CD8-positive, alpha-beta T cell (primary cell): ENCODE measurements at regions of chr17 and their contacts with region 1.

Region 1: DNA sequence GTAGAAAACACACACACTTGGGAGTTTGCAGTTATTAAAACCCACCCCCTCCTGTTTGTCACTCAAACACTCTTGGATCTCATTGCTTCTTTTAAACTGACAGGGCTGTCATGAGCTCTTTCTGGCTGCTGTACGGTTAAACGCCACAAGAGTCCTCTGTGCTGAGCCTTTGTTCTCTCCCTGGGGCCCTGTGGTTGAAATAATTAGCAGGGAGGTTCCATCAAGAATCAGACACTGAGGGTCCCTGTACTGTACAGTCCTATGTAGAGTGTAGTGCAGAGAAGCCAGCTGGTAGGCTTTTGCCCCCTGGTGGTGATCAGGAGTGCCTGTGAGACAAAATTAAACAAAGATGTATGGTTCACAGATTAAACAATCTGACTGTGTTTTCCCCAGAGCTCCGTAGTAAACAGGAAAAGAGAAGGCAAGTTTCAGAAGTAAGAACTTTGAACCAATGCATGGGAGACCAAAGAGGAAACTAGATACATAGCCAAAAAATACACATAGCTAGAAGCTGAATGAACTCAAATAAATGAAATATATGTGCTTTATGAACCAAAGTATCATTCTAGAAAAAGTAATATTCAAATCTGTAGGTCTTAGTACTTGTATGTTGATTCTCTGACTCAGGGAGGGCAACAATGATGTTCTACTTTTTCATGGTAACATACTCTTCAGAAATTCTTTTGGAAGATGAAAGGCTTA is 1.4 kb upstream of the SSH2 start:
- DNase-seq: peak; percentile 27 to 91 (median 70)
- ATAC-seq: peak; percentile 66
- H3K4me3 ChIP-seq: peak overlapping the region; percentile 77 to 82
- H3K4me3 Mint-ChIP-seq: no peak overlapping the region
- H3K27ac ChIP-seq: peak overlapping the region in 1 of 2 experiments; percentile 37
- H3K27ac Mint-ChIP-seq: no peak overlapping the region
- H3K4me1 ChIP-seq: peaks cover 27% of the 10 kb centered on the region
- H3K4me1 Mint-ChIP-seq: peaks cover 29% of the 10 kb centered on the region
- H3K27me3 ChIP-seq: no peaks in the 10 kb centered on the region
- H3K27me3 Mint-ChIP-seq: no peaks in the 10 kb centered on the region
- CTCF ChIP-seq: peak; percentile 85

Region 2: DNA sequence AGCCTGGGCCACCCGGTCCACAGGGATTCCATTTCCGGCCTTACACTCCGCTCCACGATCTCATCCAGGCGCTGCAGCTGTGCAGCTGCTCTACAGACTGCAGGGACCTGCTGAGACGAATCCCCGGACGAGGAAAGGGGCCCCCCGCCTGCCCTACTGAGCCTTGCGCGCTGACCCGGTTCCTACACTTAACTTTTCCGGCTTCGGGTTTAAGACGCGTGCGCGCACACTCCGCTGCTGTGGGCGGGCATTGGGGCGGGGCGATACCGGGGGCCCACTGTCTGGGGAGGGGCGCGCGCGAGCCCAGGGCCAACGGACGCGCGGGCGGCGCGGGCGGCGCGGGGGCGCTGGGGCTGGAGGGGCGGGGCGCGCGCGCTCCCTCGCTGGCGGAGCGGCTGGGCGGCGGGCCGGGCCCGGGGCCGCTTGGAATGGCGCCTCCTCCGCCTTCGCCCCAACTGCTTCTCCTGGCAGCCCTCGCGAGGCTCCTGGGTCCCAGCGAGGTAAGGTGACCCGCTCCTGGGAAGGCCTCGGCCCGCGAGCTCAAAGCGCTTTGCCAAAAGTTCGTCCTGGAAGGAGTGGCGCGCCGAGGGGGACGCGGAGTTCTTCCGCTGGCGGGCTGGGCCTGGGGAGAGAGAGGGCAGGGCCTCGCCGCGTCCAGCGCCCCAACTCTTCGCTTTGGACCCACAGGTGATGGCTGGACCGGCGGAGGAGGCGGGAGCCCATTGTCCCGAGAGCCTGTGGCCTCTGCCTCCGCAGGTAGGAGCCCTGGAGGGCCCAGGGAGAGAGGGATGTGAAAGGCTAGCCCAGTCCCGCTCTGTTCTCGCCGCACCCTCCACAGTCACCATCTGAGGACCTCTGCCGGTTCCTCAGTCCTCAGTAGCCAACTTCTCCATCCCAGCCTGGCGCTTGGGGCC is 362.8 kb before region 1 on chr17 and contains the start of gene TP53I13:
- CTCF ChIA-PET with region 1: interaction called, 3 read pairs
- POLR2A ChIA-PET with region 1: no interaction called
- intact Hi-C with region 1: loop called (anchors 5 kb)
- DNase-seq: peak; percentile 71 to 95 (median 91)
- ATAC-seq: peak; percentile 57
- H3K4me3 ChIP-seq: peak within 1 kb of the TSS; percentile 66 to 94
- H3K4me3 Mint-ChIP-seq: peak within 1 kb of the TSS; percentile 94
- H3K27ac ChIP-seq: peak within 1 kb of the TSS; percentile 53 to 78
- H3K27ac Mint-ChIP-seq: peak within 1 kb of the TSS; percentile 86
- H3K4me1 ChIP-seq: peaks cover 30% of the 10 kb centered on the region
- H3K4me1 Mint-ChIP-seq: peaks cover 41% of the 10 kb centered on the region
- H3K27me3 ChIP-seq: no peaks in the 10 kb centered on the region
- H3K27me3 Mint-ChIP-seq: no peaks in the 10 kb centered on the region
- CTCF ChIP-seq: no peak
- total RNA-seq, gene TP53I13: 50.2 to 54.1 TPM

Region 3: GRCh38 chr17:29617125-29617480 is 314.3 kb before region 1 on chr17:
- CTCF ChIA-PET with region 1: interaction called, 20 read pairs
- POLR2A ChIA-PET with region 1: interaction called, 3 read pairs
- intact Hi-C with region 1: loop called in 1 of 2 experiments (anchors 2 kb)
- DNase-seq: peak; percentile 78 to 94 (median 90)
- ATAC-seq: peak; percentile 64
- H3K4me3 ChIP-seq: peak overlapping the region; percentile 75 to 82
- H3K4me3 Mint-ChIP-seq: peak overlapping the region; percentile 90
- H3K27ac ChIP-seq: peak overlapping the region in 1 of 2 experiments; percentile 58
- H3K27ac Mint-ChIP-seq: peak overlapping the region; percentile 49
- H3K4me1 ChIP-seq: peaks cover 57% of the 10 kb centered on the region
- H3K4me1 Mint-ChIP-seq: peaks cover 36% of the 10 kb centered on the region
- H3K27me3 ChIP-seq: no peaks in the 10 kb centered on the region
- H3K27me3 Mint-ChIP-seq: no peaks in the 10 kb centered on the region
- CTCF ChIP-seq: peak; percentile 81

Region 4: GRCh38 chr17:29760761-29761696 is 170.4 kb before region 1 on chr17:
- CTCF ChIA-PET with region 1: interaction called, 3 read pairs
- POLR2A ChIA-PET with region 1: no interaction called
- intact Hi-C with region 1: loop called (anchors 1 kb)
- DNase-seq: peak; percentile 80 to 95 (median 92)
- ATAC-seq: peak; percentile 84
- H3K4me3 ChIP-seq: peak overlapping the region; percentile 84 to 88
- H3K4me3 Mint-ChIP-seq: peak overlapping the region; percentile 96
- H3K27ac ChIP-seq: peak overlapping the region; percentile 75 to 81
- H3K27ac Mint-ChIP-seq: peak overlapping the region; percentile 93
- H3K4me1 ChIP-seq: peaks cover 42% of the 10 kb centered on the region
- H3K4me1 Mint-ChIP-seq: peaks cover 41% of the 10 kb centered on the region
- H3K27me3 ChIP-seq: no peaks in the 10 kb centered on the region
- H3K27me3 Mint-ChIP-seq: no peaks in the 10 kb centered on the region
- CTCF ChIP-seq: no peak

Region 5: DNA sequence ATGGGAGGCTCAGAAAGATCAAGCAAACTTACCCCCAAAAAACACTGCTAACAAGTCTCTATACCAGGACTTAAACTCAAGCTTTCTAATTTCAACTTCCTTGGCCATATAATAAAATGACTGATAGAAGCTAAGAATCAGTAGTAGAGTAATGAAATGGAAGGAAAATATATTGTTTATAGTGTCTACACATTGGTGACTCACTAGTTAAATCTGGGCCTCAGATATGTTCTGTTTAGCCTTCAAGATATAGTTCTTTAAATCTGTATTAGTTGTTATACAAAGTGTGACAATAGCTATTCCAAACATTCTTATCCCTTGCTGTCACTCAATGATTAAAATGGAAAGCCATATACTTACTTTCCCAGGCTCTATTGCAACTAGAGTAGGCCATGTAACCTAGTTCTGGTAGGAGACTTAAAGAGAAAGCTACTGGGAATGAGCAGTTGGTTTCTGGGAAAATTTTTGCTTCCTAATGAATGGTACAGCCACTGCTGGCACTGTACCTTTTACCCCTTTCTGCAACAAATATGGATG is 19.7 kb before region 1 on chr17:
- CTCF ChIA-PET with region 1: interaction called, 15 read pairs
- POLR2A ChIA-PET with region 1: interaction called, 4 read pairs
- intact Hi-C with region 1: no loop called
- DNase-seq: no peak
- ATAC-seq: no peak
- H3K4me3 ChIP-seq: no peak overlapping the region
- H3K4me3 Mint-ChIP-seq: no peak overlapping the region
- H3K27ac ChIP-seq: no peak overlapping the region
- H3K27ac Mint-ChIP-seq: no peak overlapping the region
- H3K4me1 ChIP-seq: no peaks in the 10 kb centered on the region
- H3K4me1 Mint-ChIP-seq: peaks cover 24% of the 10 kb centered on the region
- H3K27me3 ChIP-seq: no peaks in the 10 kb centered on the region
- H3K27me3 Mint-ChIP-seq: no peaks in the 10 kb centered on the region
- CTCF ChIP-seq: no peak

Region 6: DNA sequence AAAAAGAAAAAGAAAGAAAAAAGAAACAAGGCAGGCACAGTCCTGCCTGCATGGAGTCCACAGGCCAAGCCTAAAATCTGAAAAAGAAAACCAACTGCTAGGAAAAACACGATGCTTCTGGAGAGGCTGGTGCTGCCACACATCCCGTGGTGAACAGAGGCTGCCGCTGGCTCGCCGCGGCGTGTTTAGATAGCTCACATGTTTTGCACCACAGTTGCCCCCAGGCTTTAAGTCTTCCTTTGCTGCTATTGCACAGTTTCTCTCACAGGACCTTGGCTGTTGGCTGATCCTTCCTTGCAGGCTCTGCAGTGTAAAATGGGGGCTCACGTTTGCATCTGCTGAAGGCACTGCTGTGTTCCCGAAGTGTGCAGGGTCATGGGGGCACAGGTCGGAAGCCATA is 295.5 kb after region 1 on chr17:
- CTCF ChIA-PET with region 1: no interaction called
- POLR2A ChIA-PET with region 1: no interaction called
- intact Hi-C with region 1: no loop called
- DNase-seq: no peak
- ATAC-seq: no peak
- H3K4me3 ChIP-seq: no peak overlapping the region
- H3K4me3 Mint-ChIP-seq: no peak overlapping the region
- H3K27ac ChIP-seq: no peak overlapping the region
- H3K27ac Mint-ChIP-seq: no peak overlapping the region
- H3K4me1 ChIP-seq: no peaks in the 10 kb centered on the region
- H3K4me1 Mint-ChIP-seq: no peaks in the 10 kb centered on the region
- H3K27me3 ChIP-seq: peaks cover 0 to 3% of the 10 kb centered on the region in 2 experiments
- H3K27me3 Mint-ChIP-seq: peaks cover 18% of the 10 kb centered on the region
- CTCF ChIP-seq: no peak

Region 7: DNA sequence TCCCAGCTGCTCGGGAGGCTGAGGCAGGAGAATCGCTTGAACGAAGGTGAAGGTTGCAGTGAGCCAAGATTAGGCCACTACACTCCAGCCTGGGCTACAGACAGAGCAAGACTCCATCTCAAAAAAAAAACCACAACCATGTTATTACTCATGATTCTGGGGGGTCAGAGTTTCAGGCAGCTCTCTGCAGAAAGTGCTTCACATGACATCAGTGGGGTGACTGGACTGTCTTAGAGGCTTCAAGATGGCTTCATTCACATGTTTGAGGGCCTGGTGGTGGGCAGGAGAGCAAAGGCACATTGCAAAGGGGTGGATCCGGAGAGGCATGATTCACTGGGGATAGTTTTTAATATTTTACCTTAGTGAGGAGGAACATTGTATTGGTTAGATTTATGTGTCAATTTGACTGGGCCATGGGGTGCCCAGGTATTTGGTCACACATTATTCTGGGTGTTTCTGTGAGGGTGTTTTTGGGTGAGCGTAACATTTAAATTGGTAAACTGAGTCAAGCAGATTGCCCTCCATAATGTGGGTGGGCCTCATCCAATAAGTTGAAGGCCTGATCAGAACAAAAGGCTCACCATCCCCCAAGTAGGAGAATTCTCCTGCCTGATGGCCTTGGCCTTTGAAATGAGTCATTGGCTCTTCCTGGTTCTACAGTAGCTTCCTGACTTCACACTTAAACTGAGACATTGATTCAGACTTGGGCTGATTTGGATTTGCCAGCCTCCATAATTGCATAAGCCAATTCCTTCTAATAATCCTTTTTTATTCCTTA is 655.6 kb after region 1 on chr17:
- CTCF ChIA-PET with region 1: no interaction called
- POLR2A ChIA-PET with region 1: no interaction called
- intact Hi-C with region 1: no loop called
- DNase-seq: no peak
- ATAC-seq: no peak
- H3K4me3 ChIP-seq: no peak overlapping the region
- H3K4me3 Mint-ChIP-seq: no peak overlapping the region
- H3K27ac ChIP-seq: no peak overlapping the region
- H3K27ac Mint-ChIP-seq: no peak overlapping the region
- H3K4me1 ChIP-seq: no peaks in the 10 kb centered on the region
- H3K4me1 Mint-ChIP-seq: no peaks in the 10 kb centered on the region
- H3K27me3 ChIP-seq: peaks cover 0 to 2% of the 10 kb centered on the region in 2 experiments
- H3K27me3 Mint-ChIP-seq: peaks cover 2% of the 10 kb centered on the region
- CTCF ChIP-seq: no peak